ENCODE measurements at regions of chr5 and their contacts with region 1.

Region 1: DNA sequence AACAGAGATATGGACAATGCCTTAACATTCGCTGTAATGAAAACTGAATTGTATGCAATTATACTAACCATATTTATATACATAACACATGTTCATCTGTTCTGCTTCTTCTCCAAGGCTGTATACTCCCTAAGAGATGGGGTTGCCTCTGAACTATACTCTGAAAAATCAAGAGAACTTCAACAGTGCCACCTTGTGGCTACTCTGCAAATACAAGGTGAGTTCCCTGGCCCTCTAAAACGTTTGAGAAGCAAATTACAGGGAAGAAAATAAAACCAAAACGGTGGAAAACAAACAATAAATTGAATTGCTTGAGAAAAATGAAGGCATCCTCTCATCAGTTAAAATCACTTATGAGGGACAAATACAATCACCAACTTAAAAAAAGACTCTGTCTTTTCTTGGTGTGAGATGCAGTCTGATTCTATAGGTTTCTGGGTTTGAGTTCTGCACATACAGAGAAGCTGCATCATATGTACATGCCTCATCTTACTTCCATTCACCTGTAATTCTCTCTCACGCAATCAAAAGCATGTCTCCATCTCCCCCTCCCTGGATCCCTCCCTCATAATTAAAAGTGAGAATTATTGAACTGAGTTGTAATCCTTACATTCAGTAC is 98.6 kb downstream of the FBXW11 start:
- DNase-seq: peak; percentile 78
- H3K4me3 Mint-ChIP-seq: no peak overlapping the region
- H3K27ac Mint-ChIP-seq: peak overlapping the region; percentile 78
- H3K4me1 Mint-ChIP-seq: peaks cover 63% of the 10 kb centered on the region
- H3K27me3 Mint-ChIP-seq: no peaks in the 10 kb centered on the region

Region 2: GRCh38 chr5:171207256-171207847 is 700.5 kb before region 1 on chr5:
- CTCF ChIA-PET with region 1: no interaction called
- intact Hi-C with region 1: loop called (anchors 1 kb)
- DNase-seq: peak; percentile 21
- H3K4me3 Mint-ChIP-seq: no peak overlapping the region
- H3K27ac Mint-ChIP-seq: no peak overlapping the region
- H3K4me1 Mint-ChIP-seq: no peaks in the 10 kb centered on the region
- H3K27me3 Mint-ChIP-seq: peaks cover 3% of the 10 kb centered on the region

Region 3: DNA sequence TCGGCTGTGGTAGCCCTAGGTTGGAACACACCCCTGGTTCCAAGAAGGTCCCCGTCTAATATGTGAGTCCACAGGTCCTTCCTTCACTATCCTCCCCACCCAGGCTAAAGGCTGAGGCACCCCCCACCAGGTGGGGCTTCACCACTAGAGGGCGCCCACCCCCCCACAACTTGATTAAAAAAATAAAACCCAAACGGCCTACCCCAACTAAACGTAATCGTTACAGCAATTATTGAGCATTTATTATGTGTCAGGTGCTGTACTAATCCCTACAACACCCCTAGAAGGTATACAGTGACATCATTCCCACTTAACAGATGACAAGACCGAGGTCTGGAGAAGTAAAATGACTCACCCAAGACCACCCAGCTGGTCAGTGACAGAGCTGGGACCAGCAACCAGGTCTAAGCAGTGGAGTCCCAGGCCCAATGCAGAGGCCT is 423.4 kb before region 1 on chr5:
- CTCF ChIA-PET with region 1: interaction called, 4 read pairs
- intact Hi-C with region 1: loop called (anchors 1 kb)
- DNase-seq: peak; percentile 59
- H3K4me3 Mint-ChIP-seq: no peak overlapping the region
- H3K27ac Mint-ChIP-seq: no peak overlapping the region
- H3K4me1 Mint-ChIP-seq: peaks cover 5% of the 10 kb centered on the region
- H3K27me3 Mint-ChIP-seq: peaks cover 11% of the 10 kb centered on the region

Region 4: GRCh38 chr5:171897231-171897630 is 10.6 kb before region 1 on chr5:
- CTCF ChIA-PET with region 1: interaction called, 5 read pairs
- intact Hi-C with region 1: loop called (anchors 1 kb)
- DNase-seq: peak; percentile 34
- H3K4me3 Mint-ChIP-seq: no peak overlapping the region
- H3K27ac Mint-ChIP-seq: no peak overlapping the region
- H3K4me1 Mint-ChIP-seq: peaks cover 40% of the 10 kb centered on the region
- H3K27me3 Mint-ChIP-seq: no peaks in the 10 kb centered on the region

Region 5: DNA sequence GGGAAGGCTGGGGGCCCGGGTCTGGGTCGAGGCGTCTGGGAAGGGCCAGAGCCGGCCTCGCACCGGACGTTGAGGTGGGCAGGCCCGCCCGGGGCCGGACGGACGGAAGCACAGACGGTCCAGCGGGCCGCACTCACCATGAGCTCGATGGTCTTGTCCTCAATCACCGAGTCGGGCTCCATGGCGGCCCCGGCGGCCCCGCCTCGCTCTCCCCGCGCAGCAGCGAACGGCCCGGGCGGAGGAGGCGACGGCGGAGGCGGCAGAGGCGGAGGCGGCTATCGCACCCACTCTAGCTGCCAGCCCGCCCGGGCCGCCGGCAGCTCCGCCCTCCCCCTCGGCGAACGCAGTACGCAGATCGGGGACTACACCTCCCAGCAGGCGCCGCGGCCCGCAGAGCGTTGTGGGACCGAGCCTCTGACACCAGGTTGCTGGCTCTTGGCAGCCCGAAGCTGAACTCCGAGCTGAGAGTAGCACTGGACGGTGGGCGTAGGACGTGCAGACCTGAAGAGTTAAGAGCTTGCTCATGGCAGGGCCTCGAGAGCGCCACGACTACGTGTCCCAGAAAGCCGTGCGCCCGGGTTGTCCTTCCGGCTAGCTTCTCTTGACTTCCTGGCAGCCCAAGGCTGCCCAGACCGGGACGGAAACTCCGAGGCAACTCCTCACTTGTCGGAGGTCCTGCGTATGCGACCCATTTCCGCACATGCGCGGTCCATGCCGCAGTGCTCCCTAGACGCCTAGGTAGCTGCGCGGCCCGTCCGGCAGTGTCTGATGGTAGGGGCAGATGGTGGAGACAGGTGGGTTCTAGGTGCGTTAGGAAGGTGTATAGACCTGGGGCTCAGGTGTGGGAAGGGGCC is 98.7 kb after region 1 on chr5 and contains the start of gene FBXW11:
- CTCF ChIA-PET with region 1: interaction called, 61 read pairs
- intact Hi-C with region 1: loop called (anchors 1 kb)
- DNase-seq: peak; percentile 96
- H3K4me3 Mint-ChIP-seq: peak within 1 kb of the TSS; percentile 96
- H3K27ac Mint-ChIP-seq: peak within 1 kb of the TSS; percentile 99
- H3K4me1 Mint-ChIP-seq: peaks cover 46% of the 10 kb centered on the region
- H3K27me3 Mint-ChIP-seq: no peaks in the 10 kb centered on the region
- total RNA-seq, gene FBXW11: 32.8 to 35.5 TPM

Region 6: DNA sequence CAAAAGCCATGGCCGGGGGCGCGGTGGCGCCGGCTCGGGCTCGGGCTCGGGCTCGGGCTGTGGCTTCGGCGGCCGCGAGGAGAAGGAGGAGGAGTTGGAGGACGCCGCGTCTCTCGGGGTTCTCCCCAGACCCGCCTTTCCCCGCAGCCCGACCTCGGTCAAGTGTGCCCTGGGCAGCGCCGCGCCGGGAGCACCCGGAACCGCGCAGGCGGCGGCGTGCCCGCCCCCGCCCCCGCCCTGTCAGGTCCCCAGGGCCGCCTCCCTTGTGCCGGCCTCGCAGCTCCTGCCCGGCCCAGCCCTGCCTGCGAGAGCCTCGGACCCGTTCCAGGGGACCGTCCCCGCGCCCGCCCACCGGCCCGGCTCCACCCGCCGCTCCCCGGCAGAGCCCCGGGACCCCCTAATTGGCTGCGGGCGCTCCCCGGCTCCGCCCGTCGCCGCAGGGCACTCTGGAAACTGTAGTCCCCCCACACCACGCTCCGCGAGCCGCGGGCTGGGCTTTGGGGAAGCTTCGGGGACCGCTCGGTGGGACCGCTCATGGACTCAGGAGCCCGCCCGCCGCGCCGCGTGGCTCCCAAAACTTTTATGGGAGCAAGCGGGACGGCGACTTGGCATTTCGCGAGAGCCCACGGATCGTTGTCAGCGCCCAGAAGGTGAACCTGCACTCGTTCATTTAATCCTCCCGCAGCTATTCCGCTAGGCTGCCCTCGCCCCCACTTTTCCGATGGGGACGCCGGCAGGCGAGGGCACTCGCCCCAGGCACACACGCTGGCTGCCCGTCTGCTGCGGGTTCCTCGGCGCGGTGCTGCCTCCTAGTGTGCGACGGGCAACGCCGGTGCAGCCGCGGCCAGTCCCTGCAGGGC is 280.4 kb after region 1 on chr5 and contains the start of gene STK10:
- CTCF ChIA-PET with region 1: interaction called, 8 read pairs
- intact Hi-C with region 1: loop called (anchors 1 kb)
- DNase-seq: peak; percentile 92
- H3K4me3 Mint-ChIP-seq: peak within 1 kb of the TSS; percentile 91
- H3K27ac Mint-ChIP-seq: peak within 1 kb of the TSS; percentile 92
- H3K4me1 Mint-ChIP-seq: peaks cover 32% of the 10 kb centered on the region
- H3K27me3 Mint-ChIP-seq: no peaks in the 10 kb centered on the region
- total RNA-seq, gene STK10: 44.7 to 55.1 TPM

Region 7: DNA sequence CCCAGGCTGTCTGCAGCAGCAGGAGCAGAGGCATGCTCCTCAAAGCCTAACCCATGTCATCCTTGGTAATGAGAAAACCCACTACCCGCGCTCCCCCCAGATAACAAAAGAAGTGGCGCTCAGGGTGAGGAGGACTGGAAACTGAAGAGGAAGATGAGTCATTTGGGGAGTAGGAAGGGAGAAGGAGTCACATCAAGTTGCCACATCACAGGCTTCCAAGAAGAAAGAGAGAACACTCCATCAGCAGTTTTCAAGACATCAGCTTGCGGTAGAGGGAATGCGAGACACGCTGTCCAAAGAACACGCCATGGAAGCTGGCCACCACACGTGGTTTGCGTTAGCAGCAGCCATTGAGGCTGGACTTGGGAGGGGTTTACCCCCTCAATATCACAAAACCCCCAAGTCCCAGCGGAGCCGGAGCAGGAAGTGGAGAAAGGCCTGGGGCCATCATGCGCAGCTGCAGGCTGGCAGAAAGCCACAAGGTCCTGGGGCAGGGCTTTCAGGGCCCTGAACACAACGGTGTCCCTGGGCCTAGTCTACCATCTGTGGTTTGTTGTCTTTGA is 505.0 kb after region 1 on chr5:
- CTCF ChIA-PET with region 1: no interaction called
- intact Hi-C with region 1: loop called (anchors 5 kb)
- DNase-seq: peak; percentile 26
- H3K4me3 Mint-ChIP-seq: no peak overlapping the region
- H3K27ac Mint-ChIP-seq: no peak overlapping the region
- H3K4me1 Mint-ChIP-seq: peaks cover 25% of the 10 kb centered on the region
- H3K27me3 Mint-ChIP-seq: peaks cover 4% of the 10 kb centered on the region

Region 8: DNA sequence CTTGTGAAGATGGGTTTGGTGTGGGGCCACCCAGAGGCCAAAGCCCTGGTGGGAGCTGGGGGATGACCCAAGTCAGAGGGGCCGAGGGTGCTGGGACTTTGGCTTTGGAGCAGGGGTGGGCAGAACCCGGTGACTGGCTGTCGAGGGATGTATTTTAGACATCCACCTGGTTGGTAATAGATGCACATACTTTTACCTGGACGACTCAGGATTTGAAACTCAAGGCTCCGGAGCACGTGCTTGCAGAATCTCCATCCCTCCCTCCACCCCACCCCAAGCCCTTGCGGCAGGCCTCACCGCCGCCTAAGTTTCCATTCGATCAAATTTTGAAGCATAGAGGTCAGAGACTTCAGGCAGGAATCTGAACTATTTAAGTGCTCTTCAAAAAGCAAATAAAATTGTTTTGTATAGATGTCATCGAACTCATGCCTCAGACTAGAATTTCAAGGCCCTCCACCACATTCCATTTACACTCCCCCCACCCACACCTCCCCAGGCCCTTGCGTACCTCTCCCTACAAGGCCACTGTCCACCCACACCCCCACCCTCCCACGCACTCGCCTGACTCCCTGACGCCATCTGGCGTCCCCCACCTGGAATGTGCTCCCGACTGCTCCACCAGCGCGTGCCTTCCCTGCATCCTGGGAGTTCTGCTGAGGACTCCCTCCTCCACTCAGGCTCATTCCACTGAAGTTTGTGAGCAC is 994.8 kb after region 1 on chr5:
- CTCF ChIA-PET with region 1: no interaction called
- intact Hi-C with region 1: no loop called
- DNase-seq: no peak
- H3K4me3 Mint-ChIP-seq: no peak overlapping the region
- H3K27ac Mint-ChIP-seq: no peak overlapping the region
- H3K4me1 Mint-ChIP-seq: peaks cover 3% of the 10 kb centered on the region
- H3K27me3 Mint-ChIP-seq: no peaks in the 10 kb centered on the region

Measured in activated naive CD4-positive, alpha-beta T cell treated with anti-CD3 and anti-CD28 coated beads for 36 hours (primary cell).